ENCODE measurements at regions of chr5 and their contacts with region 1.

Region 1: GRCh38 chr5:146426853-146427618 is 20.1 kb upstream of the TCERG1 start:
- DNase-seq: no peak
- H3K4me3 Mint-ChIP-seq: no peak overlapping the region
- H3K27ac Mint-ChIP-seq: no peak overlapping the region
- H3K4me1 Mint-ChIP-seq: peaks cover 5% of the 10 kb centered on the region
- H3K27me3 Mint-ChIP-seq: peaks cover 10% of the 10 kb centered on the region

Region 2: DNA sequence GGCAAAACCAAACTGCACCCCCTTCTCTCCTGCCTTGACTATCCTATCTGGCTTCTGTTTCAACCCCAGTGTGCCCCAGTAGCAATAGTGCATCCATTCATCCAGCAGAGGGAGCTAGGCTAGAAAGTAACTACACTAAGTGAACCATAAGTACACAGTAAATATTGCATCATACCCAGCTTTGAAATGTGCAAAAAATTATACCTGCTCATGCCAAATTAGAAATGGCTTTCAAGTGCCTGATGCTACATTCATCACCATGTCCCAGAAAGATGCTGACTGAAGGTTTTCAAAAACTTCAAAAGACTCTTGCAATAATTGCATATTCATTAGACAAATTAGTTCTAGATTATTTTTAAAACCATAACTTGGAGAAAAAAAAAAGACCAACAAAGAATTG is 745.4 kb before region 1 on chr5:
- CTCF ChIA-PET with region 1: no interaction called
- POLR2A ChIA-PET with region 1: no interaction called
- intact Hi-C with region 1: loop called (anchors 2 kb)
- DNase-seq: peak; percentile 43
- H3K4me3 Mint-ChIP-seq: no peak overlapping the region
- H3K27ac Mint-ChIP-seq: no peak overlapping the region
- H3K4me1 Mint-ChIP-seq: no peaks in the 10 kb centered on the region
- H3K27me3 Mint-ChIP-seq: no peaks in the 10 kb centered on the region

Region 3: GRCh38 chr5:146137967-146138403 is 289.1 kb before region 1 on chr5:
- CTCF ChIA-PET with region 1: no interaction called
- POLR2A ChIA-PET with region 1: no interaction called
- intact Hi-C with region 1: loop called (anchors 10 kb)
- DNase-seq: no peak
- H3K4me3 Mint-ChIP-seq: no peak overlapping the region
- H3K27ac Mint-ChIP-seq: no peak overlapping the region
- H3K4me1 Mint-ChIP-seq: peaks cover 3% of the 10 kb centered on the region
- H3K27me3 Mint-ChIP-seq: no peaks in the 10 kb centered on the region

Region 4: DNA sequence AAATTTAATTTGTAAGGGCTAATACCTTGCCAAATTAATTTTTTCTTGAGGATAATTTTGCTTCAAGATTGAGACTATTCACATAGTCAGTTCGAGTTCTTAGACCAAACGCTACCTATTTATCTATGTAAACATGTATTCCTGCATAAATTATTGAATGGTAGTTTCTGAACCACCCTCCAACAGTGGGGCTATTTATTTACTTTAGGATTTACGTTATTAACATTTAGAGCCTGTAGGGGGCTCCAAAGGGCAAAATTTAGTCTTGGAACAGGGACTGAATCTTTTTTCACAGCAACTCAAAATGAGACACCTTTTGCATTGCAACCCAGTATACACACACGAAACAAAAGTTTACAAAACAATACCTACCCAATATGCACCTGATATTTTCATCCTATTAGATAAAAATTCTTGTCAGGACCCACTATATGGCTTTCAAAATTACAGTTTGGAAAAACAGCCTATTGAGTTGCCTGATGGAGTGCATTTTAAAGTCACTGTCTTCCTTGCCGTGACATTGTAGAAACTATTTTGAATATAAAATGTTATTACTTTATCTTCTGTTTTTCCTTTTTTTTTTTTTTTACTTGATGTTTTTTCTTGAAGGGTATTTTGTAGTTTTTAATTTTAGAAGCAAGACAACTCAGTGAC is 135.5 kb before region 1 on chr5:
- CTCF ChIA-PET with region 1: interaction called, 9 read pairs
- POLR2A ChIA-PET with region 1: no interaction called
- intact Hi-C with region 1: loop called (anchors 1 kb)
- DNase-seq: no peak
- H3K4me3 Mint-ChIP-seq: no peak overlapping the region
- H3K27ac Mint-ChIP-seq: no peak overlapping the region
- H3K4me1 Mint-ChIP-seq: no peaks in the 10 kb centered on the region
- H3K27me3 Mint-ChIP-seq: no peaks in the 10 kb centered on the region

Region 5: DNA sequence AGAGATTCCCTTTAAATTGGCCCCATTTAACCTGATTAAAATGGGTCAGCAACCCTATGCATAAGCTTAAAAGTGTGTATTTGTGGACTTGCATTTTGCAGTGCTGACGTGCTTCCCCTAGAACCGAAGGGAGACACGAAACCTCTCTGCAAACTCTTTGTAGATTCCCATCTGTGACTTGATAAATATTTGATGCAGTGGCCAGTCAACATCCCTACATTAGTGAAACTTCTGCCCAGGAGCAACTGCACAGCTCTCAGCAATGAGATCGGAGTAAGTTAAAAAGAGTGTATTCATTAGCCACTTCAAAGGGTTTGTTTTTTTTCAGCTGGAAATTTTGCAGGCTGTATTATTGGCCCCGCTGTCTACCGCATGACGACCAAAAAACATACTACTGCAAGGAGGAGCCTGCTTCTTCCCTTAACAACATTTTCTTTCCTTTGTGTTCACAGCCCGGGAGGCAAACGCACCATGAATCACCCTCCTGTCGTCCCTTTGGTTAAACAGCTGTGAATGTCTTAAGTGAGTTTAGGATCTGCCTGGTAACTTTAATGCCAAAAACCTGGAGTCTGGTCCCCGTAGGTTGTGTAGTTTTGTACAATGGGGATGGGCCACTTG is 17.9 kb before region 1 on chr5:
- CTCF ChIA-PET with region 1: interaction called, 10 read pairs
- POLR2A ChIA-PET with region 1: no interaction called
- intact Hi-C with region 1: no loop called
- DNase-seq: no peak
- H3K4me3 Mint-ChIP-seq: no peak overlapping the region
- H3K27ac Mint-ChIP-seq: no peak overlapping the region
- H3K4me1 Mint-ChIP-seq: no peaks in the 10 kb centered on the region
- H3K27me3 Mint-ChIP-seq: peaks cover 2% of the 10 kb centered on the region